Naive thymus-derived CD4-positive, alpha-beta T cell (primary cell): ENCODE measurements at regions of chr6 and their contacts with region 1.

Region 1: GRCh38 chr6:158207422-158207788 is 39.3 kb downstream of the GTF2H5 start:
- DNase-seq: peak in 4 of 9 donors; percentile 9 to 42 (median 18)
- ATAC-seq: peak; percentile 54
- H3K4me3 ChIP-seq: no peak overlapping the region
- H3K4me3 Mint-ChIP-seq: peak overlapping the region in 7 of 10 donors; percentile 2 to 66 (median 22)
- H3K27ac ChIP-seq: no peak overlapping the region
- H3K27ac Mint-ChIP-seq: peak overlapping the region in 7 of 9 donors; percentile 4 to 90 (median 25)
- H3K4me1 ChIP-seq: no peaks in the 10 kb centered on the region
- H3K4me1 Mint-ChIP-seq: peaks cover 6 to 47% (median 13%) of the 10 kb centered on the region in 7 donors
- H3K27me3 ChIP-seq: no peaks in the 10 kb centered on the region
- H3K27me3 Mint-ChIP-seq: peaks cover 0 to 10% (median 4%) of the 10 kb centered on the region in 5 donors

Region 2: DNA sequence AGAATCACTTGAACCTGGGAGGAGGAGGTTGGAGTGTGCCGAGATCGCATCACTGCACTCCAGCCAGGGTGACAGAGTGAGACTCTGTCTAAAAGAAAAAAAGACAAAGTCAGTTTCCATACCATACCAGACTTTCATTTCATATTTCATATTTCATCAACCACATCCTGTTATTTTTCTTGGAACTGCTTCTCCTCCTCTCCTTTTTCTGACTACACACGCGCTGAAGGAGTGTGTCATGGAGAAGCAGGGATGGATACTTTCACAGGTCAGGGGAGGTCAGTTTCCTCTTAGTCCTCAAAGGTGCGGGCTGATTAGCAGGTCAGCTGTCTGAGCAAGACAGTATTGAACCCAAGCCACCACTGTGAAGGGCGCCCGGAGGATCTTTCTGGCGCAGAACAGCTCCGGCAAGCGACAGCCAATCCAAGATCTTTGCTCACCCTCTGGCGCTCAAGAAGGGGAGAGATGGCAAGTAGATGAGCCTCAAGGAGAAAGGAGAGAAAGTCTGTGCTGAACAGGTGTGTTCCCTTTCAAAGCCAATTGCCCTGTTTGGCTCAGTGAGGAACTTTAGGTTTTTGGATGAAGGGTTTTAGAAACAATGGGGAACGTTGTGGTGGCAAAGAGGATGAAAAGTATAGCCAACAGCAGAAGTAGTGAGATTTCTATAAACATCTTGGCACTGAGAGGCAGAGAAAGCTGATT is 244.7 kb before region 1 on chr6:
- CTCF ChIA-PET with region 1: no interaction called
- POLR2A ChIA-PET with region 1: no interaction called
- intact Hi-C with region 1: loop called in 1 of 2 experiments (anchors 5 kb)
- DNase-seq: peak in 4 of 9 donors; percentile 26 to 50 (median 41)
- ATAC-seq: peak; percentile 31
- H3K4me3 ChIP-seq: peak overlapping the region; percentile 14
- H3K4me3 Mint-ChIP-seq: peak overlapping the region; percentile 51 to 84 (median 72)
- H3K27ac ChIP-seq: peak overlapping the region; percentile 25
- H3K27ac Mint-ChIP-seq: peak overlapping the region; percentile 77 to 97 (median 89)
- H3K4me1 ChIP-seq: peaks cover 0 to 14% of the 10 kb centered on the region in 2 donors
- H3K4me1 Mint-ChIP-seq: peaks cover 8 to 32% (median 28%) of the 10 kb centered on the region in 7 donors
- H3K27me3 ChIP-seq: no peaks in the 10 kb centered on the region
- H3K27me3 Mint-ChIP-seq: no peaks in the 10 kb centered on the region

Region 3: DNA sequence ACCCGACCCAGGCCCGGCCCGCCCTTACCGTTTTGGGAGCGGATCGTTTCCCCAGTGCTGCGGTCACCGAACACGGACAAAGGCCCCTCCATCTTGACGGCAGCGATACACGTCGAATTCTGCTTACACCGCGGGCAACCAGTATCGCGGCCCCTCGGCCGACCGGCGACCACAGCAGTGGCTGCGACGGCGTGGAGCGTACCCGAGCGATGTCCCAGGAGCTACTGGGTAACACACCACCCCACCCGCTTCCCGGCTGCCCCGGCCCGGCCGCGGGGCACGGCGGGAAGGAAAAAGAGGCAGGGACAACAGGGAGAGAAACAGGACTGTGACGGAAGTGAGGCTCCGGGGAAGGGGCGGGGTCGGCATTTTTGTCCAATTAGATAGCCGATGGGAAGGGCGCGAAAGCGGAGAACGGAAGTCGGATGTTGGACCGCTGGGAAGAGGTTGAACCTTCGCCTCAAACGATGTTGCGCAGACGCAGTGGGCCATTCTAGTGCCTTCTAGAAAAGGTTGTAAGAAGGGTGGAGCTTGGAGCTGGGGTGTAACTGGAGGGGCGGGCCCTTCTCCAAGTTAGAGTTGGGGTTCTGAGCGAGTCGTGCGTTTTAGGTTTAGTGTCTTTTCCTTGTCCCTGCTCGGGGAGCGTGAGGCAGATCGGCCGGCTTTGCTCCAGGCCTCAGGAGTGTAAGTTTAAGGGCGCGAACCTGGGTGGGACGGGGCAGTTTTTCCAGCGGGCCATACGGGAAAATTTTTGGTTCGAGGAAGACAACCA is 1582.2 kb after region 1 on chr6 and contains the start of gene TCP1:
- CTCF ChIA-PET with region 1: no interaction called
- POLR2A ChIA-PET with region 1: no interaction called
- intact Hi-C with region 1: no loop called
- DNase-seq: peak; percentile 87 to 99 (median 98)
- ATAC-seq: peak; percentile 89
- H3K4me3 ChIP-seq: peak within 1 kb of the TSS; percentile 98
- H3K4me3 Mint-ChIP-seq: peak within 1 kb of the TSS; percentile 94 to 100 (median 99)
- H3K27ac ChIP-seq: peak within 1 kb of the TSS; percentile 94
- H3K27ac Mint-ChIP-seq: peak within 1 kb of the TSS; percentile 95 to 99 (median 98)
- H3K4me1 ChIP-seq: peaks cover 15 to 27% of the 10 kb centered on the region in 2 donors
- H3K4me1 Mint-ChIP-seq: peaks cover 41 to 83% (median 69%) of the 10 kb centered on the region in 7 donors
- H3K27me3 ChIP-seq: no peaks in the 10 kb centered on the region
- H3K27me3 Mint-ChIP-seq: peaks cover 0 to 3% (median 0%) of the 10 kb centered on the region in 5 donors
- total RNA-seq, gene TCP1: 147 to 225 (median 154) TPM